Lower leg skin (tissue), 4 donors: ENCODE measurements at regions of chr20 and their contacts with region 1.

Region 1: DNA sequence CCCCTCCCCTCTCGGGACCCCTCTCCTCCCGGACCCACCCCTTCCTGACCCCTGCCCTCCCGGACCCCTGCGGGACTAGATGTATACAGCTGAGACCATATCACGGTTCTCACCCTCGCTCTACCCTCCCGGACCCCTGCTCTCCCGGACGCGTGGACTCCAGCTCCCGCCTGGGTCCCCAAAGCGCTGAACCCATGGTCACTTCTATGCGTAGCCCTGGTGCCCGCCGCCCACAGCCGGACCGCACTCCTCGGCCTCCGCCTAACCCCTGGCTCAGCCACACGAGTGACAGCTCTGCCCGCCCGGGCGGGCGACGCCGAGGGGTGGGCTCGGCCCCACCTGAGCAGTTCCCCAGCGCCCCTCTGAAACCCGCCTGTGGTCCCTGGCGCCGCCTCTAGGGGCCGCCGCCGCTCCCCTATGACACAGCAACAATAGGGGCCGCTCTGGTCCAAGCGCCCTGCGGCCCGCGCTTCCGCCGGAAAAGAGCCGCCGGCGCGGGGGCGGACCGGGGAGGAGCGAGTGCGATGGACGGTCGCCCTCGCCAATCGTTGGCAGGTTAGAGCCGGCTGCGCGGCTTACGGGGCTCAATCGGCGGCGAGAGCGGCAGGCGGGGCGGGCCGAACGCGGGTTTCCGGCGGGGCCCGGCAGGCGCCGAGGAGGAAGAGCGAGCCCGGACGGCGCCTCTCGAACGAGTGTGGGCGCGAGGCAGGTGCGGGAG is at the start of gene ADRM1:
- DNase-seq: peak; percentile 91 to 99
- H3K4me3 ChIP-seq: peak within 1 kb of the TSS; percentile 58
- CTCF ChIP-seq: peak in 1 of 3 donors; percentile 96
- POLR2A ChIP-seq: no peak
- total RNA-seq, gene ADRM1: 143 to 198 (median 167) TPM

Region 2: GRCh38 chr20:61925555-61926252 is 376.8 kb before region 1 on chr20:
- intact Hi-C with region 1: no loop called
- DNase-seq: no peak
- H3K4me3 ChIP-seq: no peak overlapping the region
- CTCF ChIP-seq: no peak
- POLR2A ChIP-seq: no peak

Region 3: DNA sequence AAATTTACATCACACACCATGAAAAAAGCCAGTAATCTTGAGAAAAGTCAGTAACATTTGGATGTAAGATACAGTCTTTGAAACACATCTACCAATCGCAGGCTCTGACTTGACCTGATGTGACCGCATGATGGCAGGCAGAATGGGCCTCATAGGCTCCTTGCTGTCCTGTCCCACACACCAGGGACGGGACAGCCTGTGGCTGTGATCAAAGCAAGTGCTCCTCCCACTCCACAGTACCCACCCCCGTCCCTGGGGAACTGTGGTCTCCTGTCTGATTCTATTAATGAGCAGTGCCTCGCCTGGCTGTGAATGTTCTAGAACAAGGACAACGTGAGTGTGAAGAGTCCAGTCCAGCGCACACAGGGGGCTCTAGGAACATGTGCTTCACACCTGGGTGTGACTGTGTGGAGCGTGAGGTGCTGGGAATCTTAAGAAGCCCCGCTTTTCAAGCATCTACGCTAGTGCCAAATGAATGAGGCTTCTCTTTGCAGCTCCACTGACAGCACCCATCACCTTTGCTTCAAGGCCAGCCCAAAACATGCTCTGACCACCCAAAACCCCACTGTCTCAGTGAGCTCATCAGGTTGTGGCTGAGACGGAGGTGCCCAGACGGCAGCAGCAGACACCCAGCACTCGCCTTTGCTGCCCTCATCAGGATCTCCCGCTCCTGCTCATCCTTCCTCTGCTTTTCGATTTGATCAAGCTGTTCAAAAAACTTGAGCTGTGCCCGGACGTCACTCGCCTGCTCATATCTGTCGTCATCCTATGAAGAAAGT is 304.0 kb before region 1 on chr20:
- intact Hi-C with region 1: no loop called
- DNase-seq: no peak
- H3K4me3 ChIP-seq: no peak overlapping the region
- CTCF ChIP-seq: no peak
- POLR2A ChIP-seq: no peak

Region 4: DNA sequence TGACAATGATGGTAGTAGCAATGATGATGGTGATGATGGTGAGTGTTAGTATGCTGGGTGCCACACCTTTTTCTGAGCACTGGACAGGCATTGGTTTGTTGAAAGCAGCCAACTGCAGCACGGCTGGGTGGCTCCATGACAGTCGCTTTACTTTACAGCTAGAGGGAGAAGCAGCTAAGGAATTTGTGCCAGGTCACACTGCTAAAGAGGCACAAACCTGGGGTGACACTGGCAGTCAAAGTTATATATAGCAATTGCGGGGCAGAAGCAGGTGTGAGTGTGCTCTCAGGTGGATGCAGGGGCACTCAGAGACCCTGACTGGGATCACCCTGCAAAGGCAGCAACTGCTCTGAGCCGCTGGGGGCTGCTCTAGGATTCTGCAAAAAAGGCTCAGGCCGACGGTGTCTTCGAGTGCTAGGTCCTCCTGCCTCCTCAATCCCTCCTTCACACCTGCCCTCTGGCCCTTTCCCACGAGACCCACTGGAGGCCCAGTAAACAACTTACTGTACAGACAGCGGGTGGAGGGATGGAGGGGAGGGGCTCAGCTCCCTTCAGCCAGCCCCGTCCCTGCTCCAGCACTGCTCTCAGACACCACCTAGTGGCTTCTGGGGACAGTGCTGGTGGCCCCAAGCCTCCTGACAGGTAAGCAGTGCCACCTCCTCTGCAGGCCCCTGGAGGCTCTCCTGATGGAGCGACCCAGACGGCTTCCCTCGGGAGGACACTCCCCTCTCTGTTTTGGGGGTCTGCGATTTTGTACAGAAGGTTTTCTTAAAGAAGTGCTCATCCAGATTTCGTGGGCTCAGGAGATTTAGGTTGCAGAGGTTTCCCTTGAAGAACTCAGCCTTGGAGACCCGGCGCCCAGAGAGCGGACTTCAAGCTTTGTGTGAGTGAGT is 80.1 kb after region 1 on chr20:
- intact Hi-C with region 1: loop called (anchors 5 kb)
- DNase-seq: peak; percentile 74 to 95
- H3K4me3 ChIP-seq: no peak overlapping the region
- CTCF ChIP-seq: peak in 1 of 3 donors; percentile 92
- POLR2A ChIP-seq: no peak

Region 5: DNA sequence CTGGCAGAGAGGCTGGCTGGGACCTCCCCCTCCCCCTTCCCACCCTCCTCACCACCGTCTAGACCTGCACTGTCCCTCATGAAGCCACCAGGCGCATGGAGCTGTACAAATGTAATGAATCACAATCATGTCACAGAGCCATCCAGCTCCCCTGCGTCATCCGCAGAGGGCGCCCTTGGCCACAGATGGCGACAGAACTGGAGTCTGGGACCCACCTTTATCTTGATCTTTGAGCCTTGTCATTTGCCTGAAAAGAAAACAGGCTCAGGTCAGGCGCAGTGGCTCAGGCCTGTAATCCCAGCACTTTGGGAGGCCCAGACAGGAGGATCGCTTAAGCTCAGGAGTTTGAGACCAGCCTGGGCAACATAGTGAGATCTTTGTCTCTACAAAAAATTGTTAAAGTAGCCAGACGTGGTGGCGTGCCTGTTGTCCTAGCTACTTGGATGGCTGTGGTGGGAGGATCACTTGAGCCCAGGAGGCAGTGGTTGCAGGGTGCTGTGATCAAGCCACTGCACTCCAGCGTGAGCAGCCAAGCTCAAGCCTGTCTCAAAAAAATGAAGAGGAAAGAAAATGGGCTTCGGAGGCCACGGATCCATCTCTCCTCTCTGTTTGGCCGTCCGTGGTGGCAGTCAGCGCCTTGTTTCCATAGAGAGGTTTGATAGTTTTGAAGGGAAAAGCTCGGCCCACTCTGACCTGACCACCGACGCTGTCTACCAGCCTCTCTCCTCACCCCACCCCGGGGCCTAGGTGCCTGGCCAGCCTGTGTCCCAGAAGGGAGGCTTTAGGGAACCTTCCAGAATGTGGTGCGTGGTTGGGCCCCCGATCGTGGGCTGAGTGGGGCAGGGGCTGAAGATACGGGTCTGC is 520.5 kb after region 1 on chr20:
- intact Hi-C with region 1: loop called (anchors 10 kb)
- DNase-seq: no peak
- H3K4me3 ChIP-seq: no peak overlapping the region
- CTCF ChIP-seq: peak in 1 of 3 donors; percentile 39
- POLR2A ChIP-seq: no peak